Activated CD8-positive, alpha-beta T cell treated with anti-CD3 and anti-CD28 coated beads, Interleukin-2, amount 10 ng/mL, durations not matched to agents 7 days and 5 days (primary cell): ENCODE measurements at regions of chr17 and their contacts with region 1.

Region 1: DNA sequence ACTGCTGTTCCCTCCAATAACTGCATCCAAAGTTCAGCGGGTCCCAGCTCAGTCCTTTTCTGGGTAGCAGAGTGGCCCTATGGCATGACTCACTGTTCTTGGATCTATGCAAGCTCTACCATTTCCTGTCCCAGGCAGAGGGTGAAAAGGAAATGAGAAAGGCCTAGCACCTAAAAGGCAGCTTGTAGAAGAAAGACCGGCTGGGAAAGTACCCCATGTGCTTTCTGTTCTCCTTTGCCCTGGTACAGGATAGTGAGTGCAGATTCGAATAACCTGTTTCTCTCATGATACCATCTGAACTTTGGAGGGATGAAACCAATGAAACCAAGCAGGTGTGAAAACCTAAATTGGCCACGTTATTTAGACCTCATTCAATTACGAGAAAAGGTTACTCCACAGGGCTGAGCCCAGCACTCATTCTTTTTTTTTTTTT is 12.7 kb upstream of the HASPIN start:
- DNase-seq: peak; percentile 87
- ATAC-seq: peak; percentile 99
- H3K4me3 Mint-ChIP-seq: peak overlapping the region; percentile 37
- H3K27ac Mint-ChIP-seq: peak overlapping the region; percentile 85
- H3K4me1 Mint-ChIP-seq: peaks cover 53% of the 10 kb centered on the region
- H3K27me3 Mint-ChIP-seq: no peaks in the 10 kb centered on the region

Region 2: DNA sequence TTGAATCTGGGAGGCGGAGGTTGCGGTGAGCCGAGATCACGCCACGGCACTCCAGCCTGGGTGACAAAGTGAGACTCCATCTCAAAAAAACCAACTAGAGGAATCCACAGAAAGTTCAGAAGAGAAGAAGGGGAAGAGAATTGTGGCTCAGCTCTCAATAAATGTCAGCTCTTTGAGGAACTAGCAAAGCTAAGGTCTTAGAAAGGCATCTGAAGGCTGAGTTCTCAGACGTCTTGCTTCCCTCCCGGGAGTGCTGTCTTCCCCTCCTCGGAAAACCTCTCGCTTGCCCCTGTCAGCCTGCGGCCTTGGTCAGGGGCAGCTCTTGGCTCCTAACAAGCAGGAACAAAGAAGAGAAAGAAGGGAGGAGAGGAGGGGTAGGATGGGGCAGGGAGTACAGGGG is 80.2 kb before region 1 on chr17:
- CTCF ChIA-PET with region 1: no interaction called
- POLR2A ChIA-PET with region 1: no interaction called
- DNase-seq: no peak
- ATAC-seq: no peak
- H3K4me3 Mint-ChIP-seq: no peak overlapping the region
- H3K27ac Mint-ChIP-seq: no peak overlapping the region
- H3K4me1 Mint-ChIP-seq: peaks cover 9% of the 10 kb centered on the region
- H3K27me3 Mint-ChIP-seq: no peaks in the 10 kb centered on the region

Region 3: GRCh38 chr17:3695723-3696411 is 15.1 kb before region 1 on chr17 and contains the start of gene P2RX5:
- CTCF ChIA-PET with region 1: interaction called, 14 read pairs
- POLR2A ChIA-PET with region 1: interaction called, 31 read pairs
- DNase-seq: peak; percentile 71
- ATAC-seq: peak; percentile 78
- H3K4me3 Mint-ChIP-seq: peak within 1 kb of the TSS; percentile 86
- H3K27ac Mint-ChIP-seq: peak within 1 kb of the TSS; percentile 87
- H3K4me1 Mint-ChIP-seq: peaks cover 37% of the 10 kb centered on the region
- H3K27me3 Mint-ChIP-seq: no peaks in the 10 kb centered on the region
- total RNA-seq, gene P2RX5: 7.8 to 8.1 TPM